ENCODE measurements at regions of chr12 and their contacts with region 1.

Region 1: DNA sequence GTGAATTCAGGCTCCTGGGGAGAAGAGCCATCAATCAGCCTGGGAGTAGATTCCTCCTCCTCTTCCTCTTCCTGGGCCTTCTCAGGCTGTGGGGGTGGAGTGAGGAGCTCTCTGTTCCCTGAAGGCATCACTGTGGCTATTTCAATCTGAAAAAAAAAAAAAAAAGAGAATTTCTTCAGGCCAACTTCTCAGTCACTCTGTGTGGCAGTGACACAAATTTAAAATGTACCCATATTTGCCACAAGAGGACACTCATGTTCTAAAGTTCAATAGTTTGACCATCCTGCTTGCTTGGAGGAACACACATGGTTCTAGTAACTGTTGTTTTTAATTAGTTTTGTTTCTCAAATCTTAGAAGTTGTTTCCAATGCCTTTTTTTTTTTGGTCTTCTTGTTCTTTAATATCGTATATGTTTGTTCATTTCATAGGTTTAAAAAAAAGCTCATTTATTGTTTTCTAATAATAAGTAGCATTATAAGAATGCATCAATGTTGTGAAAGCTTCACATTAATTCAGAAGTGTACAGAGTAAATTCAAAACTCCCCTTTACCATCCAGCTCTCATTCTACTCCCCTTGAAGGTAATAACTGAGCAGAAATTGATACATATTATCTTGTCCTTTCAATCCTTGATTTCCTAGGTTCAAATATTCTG is 23.3 kb upstream of the CCER1 start:
- DNase-seq: peak; percentile 36
- H3K27ac ChIP-seq: no peak overlapping the region
- CTCF ChIP-seq: peak; percentile 64

Region 2: DNA sequence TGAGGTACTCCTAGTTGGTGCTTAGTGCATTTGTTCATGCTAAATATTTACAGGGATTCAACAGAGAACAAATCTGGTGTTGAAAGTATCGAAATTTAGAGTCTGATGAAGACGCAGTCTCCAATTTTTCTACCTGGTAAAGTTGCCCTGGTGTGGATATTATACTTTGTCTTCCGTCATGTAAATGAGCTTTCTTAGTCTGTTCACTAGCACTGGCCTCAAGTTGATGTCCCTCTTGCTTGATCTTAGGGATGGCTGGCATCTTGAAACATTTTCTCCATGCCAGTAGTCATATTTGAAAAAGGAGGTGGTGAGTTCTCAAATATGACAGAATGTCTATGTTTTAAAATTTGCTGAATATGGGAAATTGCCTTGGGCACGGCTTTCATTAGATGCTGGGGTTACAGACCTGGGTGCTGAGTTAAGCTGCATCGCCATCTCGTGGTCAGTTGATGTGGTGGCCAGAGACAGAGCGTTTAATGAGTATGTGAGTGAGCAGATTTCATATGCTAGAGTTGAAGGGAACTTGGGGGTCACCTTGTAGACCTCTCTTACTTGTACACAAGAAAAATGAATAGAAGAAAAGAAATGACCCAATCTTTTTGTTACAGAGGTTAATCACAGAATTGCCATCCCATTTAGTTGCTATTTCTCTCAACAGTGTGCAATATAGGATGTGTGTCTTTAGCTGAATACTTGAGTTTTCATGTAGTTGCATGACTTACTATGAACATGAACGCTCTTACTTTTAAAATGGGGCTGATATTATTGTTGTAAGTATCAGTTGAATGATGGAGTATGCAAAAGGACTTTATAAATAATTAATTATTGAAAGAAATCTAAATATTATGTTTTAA is 377.1 kb after region 1 on chr12:
- CTCF ChIA-PET with region 1: interaction called, 15 read pairs
- POLR2A ChIA-PET with region 1: no interaction called
- DNase-seq: peak; percentile 67
- H3K27ac ChIP-seq: no peak overlapping the region
- CTCF ChIP-seq: peak; percentile 85

Measured in RWPE1 (cell line).